Activated T-helper 2 cell treated with anti-CD3 and anti-CD28 coated beads, Interferon-gamma antibody, Interleukin-2, Interleukin-4, amounts not matched to agents 10 μg/mL and 5 μg/mL and 100 μg/mL, durations not matched to agents 14 hours and 24 hours and 36 hours (primary cell): ENCODE measurements at regions of chr5 and their contacts with region 1.

Region 1: GRCh38 chr5:91170266-91170665 is 212.9 kb downstream of the ARRDC3 start:
- DNase-seq: no peak
- H3K4me3 Mint-ChIP-seq: no peak overlapping the region
- H3K27ac Mint-ChIP-seq: peak overlapping the region; percentile 81
- H3K4me1 Mint-ChIP-seq: peaks cover 34% of the 10 kb centered on the region
- H3K27me3 Mint-ChIP-seq: no peaks in the 10 kb centered on the region

Region 2: DNA sequence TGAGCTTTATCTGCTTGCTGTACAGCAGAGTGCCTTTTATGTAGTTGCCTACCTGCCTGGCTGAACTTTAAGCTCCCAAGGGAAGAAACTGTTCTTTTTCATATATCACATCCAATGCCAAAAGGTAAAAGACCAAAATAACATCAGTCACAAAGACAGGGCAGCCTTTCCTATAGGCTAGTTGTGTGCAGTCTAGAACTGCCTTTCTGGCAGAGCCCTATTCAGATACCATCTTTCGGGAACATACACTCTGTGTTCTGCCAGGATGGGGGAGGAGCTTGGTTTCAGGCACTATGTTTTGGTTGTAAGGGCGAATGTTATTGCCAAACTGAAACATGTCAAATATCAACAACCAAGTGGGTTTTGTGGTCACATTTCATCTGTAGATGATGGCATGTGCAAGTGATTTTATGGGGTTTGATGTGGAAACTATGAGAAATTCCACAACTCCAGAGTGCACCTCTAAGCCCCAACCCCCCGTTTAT is 297.2 kb before region 1 on chr5:
- intact Hi-C with region 1: loop called (anchors 1 kb)
- DNase-seq: no peak
- H3K4me3 Mint-ChIP-seq: no peak overlapping the region
- H3K27ac Mint-ChIP-seq: peak overlapping the region; percentile 18
- H3K4me1 Mint-ChIP-seq: peaks cover 39% of the 10 kb centered on the region
- H3K27me3 Mint-ChIP-seq: peaks cover 35% of the 10 kb centered on the region

Region 3: DNA sequence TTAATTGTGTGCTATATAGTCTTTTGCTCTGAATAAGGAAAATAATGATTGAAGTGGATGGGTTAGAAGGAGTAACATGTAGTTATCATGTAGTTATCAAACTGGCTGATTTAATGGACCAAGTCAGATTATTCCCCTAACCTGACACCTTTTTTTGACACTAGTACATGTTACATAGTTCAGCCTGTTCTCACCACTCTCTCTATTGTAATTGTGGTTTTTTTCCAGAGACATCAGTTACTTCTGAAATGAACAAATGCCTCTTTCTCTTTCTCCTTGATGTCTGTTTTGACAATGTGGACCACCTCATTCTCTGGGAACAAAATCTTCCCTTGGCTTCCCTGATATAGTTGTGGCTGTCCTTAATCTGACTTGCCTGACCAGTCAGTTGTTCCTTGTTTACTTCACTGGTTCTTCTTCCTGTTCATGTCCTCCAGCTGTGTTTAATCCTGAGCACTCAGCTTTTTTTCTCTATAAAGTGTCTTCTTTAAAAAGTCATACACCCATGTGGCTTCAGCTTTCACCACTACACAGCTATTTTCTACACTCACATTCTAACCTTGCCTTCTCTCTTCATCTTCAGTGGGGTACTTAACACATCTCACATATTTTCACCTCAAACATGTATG is 30.6 kb before region 1 on chr5:
- intact Hi-C with region 1: loop called (anchors 1 kb)
- DNase-seq: no peak
- H3K4me3 Mint-ChIP-seq: no peak overlapping the region
- H3K27ac Mint-ChIP-seq: no peak overlapping the region
- H3K4me1 Mint-ChIP-seq: peaks cover 29% of the 10 kb centered on the region
- H3K27me3 Mint-ChIP-seq: no peaks in the 10 kb centered on the region

Region 4: GRCh38 chr5:91272858-91273257 is 102.6 kb after region 1 on chr5:
- intact Hi-C with region 1: loop called (anchors 2 kb)
- DNase-seq: no peak
- H3K4me3 Mint-ChIP-seq: no peak overlapping the region
- H3K27ac Mint-ChIP-seq: peak overlapping the region; percentile 50
- H3K4me1 Mint-ChIP-seq: peaks cover 27% of the 10 kb centered on the region
- H3K27me3 Mint-ChIP-seq: peaks cover 9% of the 10 kb centered on the region